Breast epithelium (tissue), 4 donors: ENCODE measurements at regions of chr7 and their contacts with region 1.

Region 1: GRCh38 chr7:135795846-135796570 is 47.4 kb upstream of the FAM180A start:
- DNase-seq: peak in 1 of 2 donors; percentile 43
- H3K4me3 ChIP-seq: no peak overlapping the region
- H3K27ac ChIP-seq: peak overlapping the region; percentile 69 to 81
- H3K4me1 ChIP-seq: no peaks in the 10 kb centered on the region
- H3K27me3 ChIP-seq: no peaks in the 10 kb centered on the region
- CTCF ChIP-seq: no peak
- POLR2A ChIP-seq: no peak

Region 2: GRCh38 chr7:135662373-135663114 is 133.5 kb before region 1 on chr7 and contains the start of gene STMP1:
- intact Hi-C with region 1: loop called (anchors 10 kb)
- DNase-seq: peak; percentile 95 to 97
- H3K4me3 ChIP-seq: peak within 1 kb of the TSS; percentile 87 to 98 (median 97)
- H3K27ac ChIP-seq: peak within 1 kb of the TSS; percentile 90 to 99
- H3K4me1 ChIP-seq: peaks cover 0 to 5% of the 10 kb centered on the region in 2 donors
- H3K27me3 ChIP-seq: no peaks in the 10 kb centered on the region
- CTCF ChIP-seq: peak in 2 of 3 donors; percentile 87 to 93
- POLR2A ChIP-seq: peak; percentile 88
- total RNA-seq, gene STMP1: 13.9 to 27.2 (median 18.4) TPM

Region 3: DNA sequence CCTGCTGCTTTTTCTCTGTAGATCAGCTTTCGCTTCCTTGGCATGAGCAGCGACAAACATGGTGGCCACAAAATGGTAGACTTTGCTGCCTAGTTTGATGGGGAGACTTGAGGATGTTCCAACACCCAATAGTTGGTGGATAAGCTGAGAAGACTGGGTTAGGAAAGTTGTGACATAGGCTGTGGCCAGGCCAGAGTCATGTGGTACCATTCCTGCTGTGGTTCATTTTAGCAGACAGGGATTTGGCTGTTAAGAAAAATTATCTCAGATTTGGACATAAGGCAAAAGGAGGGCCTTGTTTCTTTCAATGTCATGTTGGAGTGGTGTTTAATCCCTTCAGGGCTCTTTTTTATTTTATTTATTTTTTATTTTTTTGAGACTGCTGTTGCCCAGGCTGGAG is 20.8 kb before region 1 on chr7:
- intact Hi-C with region 1: no loop called
- DNase-seq: no peak
- H3K4me3 ChIP-seq: no peak overlapping the region
- H3K27ac ChIP-seq: no peak overlapping the region
- H3K4me1 ChIP-seq: no peaks in the 10 kb centered on the region
- H3K27me3 ChIP-seq: no peaks in the 10 kb centered on the region
- CTCF ChIP-seq: no peak
- POLR2A ChIP-seq: no peak

Region 4: DNA sequence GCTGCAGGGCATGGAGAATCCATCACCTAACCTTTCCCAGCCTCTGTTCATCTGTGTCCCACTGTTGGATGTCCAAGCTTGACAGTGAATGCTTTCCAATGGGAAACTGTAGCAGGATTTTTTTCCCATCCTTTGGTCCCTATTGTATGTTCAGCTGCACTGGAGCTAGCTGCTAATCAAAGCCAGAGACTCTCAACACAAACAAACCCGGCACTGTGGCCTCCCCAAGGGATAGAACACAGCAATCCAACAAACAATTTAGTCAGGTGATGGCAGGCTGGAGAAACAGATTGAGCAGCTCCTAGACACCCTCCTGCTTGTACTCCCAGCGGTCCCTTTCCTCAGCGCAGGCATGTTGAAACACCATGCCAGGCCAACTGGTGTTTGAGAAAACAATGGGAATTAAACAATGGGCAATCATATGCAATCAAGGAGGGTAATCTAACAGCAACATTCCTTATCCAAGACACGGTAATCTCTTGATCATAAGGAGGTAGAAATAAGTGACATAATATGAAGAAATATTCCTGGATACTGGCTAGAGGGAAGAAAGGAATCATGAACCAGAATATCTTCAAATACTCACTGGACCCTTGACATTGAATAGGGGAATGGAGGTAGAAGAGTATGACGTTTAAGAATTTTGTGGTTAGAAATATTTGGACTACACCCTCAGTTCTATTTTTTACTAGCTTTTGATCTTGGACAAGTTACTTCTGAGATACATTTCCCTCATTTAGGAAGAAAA is 1532.5 kb after region 1 on chr7:
- intact Hi-C with region 1: no loop called
- DNase-seq: no peak
- H3K4me3 ChIP-seq: no peak overlapping the region
- H3K27ac ChIP-seq: peak overlapping the region; percentile 71 to 74
- H3K4me1 ChIP-seq: no peaks in the 10 kb centered on the region
- H3K27me3 ChIP-seq: no peaks in the 10 kb centered on the region
- CTCF ChIP-seq: no peak
- POLR2A ChIP-seq: no peak